ENCODE measurements at regions of chr3 and their contacts with region 1.

Region 1: GRCh38 chr3:98602078-98602678 is 8.8 kb upstream of the CPOX start:
- DNase-seq: peak; percentile 56 to 67
- ATAC-seq: peak; percentile 92 to 96
- H3K4me3 ChIP-seq: no peak overlapping the region
- H3K27ac ChIP-seq: no peak overlapping the region
- H3K4me1 ChIP-seq: no peaks in the 10 kb centered on the region
- CTCF ChIP-seq: peak; percentile 93
- EP300 ChIP-seq: no peak
- POLR2A ChIP-seq: no peak
- RAD21 ChIP-seq: peak; percentile 89 to 92

Region 2: DNA sequence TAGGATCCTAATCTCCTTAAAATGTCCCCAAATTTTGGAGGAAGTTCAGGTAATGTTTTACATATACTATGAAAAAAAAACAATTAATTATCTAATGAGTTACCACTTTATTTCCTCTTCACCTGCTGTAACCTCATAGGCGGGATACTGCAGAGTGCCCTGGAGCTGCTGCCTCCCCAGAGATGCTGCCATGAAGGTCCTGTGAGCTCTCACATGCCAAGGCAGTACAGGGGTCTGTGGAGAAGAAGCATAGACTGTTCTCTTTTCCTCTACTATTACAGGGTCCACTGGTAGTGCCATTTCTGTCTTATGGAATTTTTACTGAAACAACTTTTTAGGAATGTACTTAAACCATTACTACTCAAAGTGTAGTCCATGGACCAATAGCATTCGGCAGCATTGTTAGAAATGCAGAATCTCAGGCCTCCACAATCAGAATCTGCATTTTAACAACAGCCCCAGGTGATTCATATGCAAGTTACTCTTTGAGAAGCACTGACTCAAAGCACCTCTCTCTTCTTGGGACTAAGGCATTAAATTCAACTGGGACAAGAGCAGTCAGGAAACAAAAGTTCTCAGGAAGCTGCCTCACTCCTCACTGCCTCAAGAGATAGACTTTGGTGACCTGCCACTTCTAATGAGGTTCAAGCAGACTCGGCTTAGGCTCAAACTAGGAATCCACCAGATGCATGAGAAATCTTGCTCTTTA is 21.5 kb after region 1 on chr3:
- CTCF ChIA-PET with region 1: interaction called, 16 read pairs
- POLR2A ChIA-PET with region 1: no interaction called
- DNase-seq: no peak
- ATAC-seq: no peak
- H3K4me3 ChIP-seq: no peak overlapping the region
- H3K27ac ChIP-seq: no peak overlapping the region
- H3K4me1 ChIP-seq: no peaks in the 10 kb centered on the region
- CTCF ChIP-seq: no peak
- EP300 ChIP-seq: no peak
- POLR2A ChIP-seq: no peak
- RAD21 ChIP-seq: no peak

Region 3: DNA sequence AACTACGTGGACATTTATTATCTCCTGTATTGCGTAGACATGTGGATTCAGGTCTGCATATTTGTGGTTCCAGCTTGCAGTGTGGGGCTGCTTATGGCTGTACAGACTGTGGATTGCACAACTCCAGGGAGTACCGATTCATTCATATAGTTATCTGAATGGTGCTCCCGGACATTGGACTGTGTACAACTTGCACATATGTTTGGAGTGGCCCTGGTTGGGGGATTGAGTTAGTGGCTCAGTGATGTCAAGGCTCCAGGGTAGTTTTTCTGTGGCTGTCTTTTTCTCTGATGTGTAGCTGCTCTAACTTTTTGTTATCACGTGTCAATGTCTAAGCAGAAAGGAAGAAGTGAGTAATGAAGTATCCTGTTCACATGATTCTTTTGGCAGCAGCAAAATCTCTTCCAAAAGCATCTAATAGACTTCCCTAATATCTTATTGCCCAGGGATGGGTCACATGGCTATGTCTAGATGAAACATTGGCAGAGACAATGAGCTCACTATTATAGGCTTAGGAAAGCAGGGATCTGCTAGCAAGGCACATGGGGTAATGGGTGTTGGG is 176.8 kb after region 1 on chr3:
- CTCF ChIA-PET with region 1: interaction called, 13 read pairs
- POLR2A ChIA-PET with region 1: no interaction called
- DNase-seq: no peak
- ATAC-seq: peak in 1 of 2 experiments; percentile 30; a peak in 1 of 6 replicates
- H3K4me3 ChIP-seq: no peak overlapping the region
- H3K27ac ChIP-seq: no peak overlapping the region
- H3K4me1 ChIP-seq: no peaks in the 10 kb centered on the region
- CTCF ChIP-seq: no peak
- EP300 ChIP-seq: no peak
- POLR2A ChIP-seq: no peak
- RAD21 ChIP-seq: no peak

Region 4: GRCh38 chr3:98817547-98818041 is 215.4 kb after region 1 on chr3:
- CTCF ChIA-PET with region 1: interaction called, 110 read pairs
- POLR2A ChIA-PET with region 1: no interaction called
- DNase-seq: peak; percentile 47 to 59
- ATAC-seq: peak; percentile 55 to 67; a peak in 5 of 6 replicates
- H3K4me3 ChIP-seq: no peak overlapping the region
- H3K27ac ChIP-seq: peak overlapping the region; percentile 51 to 76; a peak in 5 of 6 replicates
- H3K4me1 ChIP-seq: peaks cover 63% of the 10 kb centered on the region
- CTCF ChIP-seq: peak; percentile 71
- EP300 ChIP-seq: no peak
- POLR2A ChIP-seq: no peak
- RAD21 ChIP-seq: peak; percentile 70 to 79

Region 5: DNA sequence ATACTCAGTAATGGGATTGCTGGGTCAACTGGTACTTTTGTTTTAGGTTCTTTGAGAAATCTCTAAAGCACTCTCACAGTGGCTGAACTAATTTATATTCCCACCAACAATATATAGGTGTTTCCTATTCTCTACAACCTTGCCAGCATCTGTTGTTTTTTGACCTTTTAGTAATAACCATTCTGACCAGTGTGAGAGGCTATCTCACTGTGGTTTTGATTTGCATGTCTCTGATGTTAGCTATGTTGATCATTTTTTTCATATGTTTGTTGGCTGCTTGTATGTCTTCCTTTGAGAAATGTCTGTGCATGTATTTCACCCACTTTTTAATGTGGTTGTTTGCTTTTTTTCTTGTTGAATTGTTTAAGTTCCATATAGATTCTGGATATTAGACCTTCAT is 397.5 kb after region 1 on chr3:
- CTCF ChIA-PET with region 1: interaction called, 55 read pairs
- POLR2A ChIA-PET with region 1: interaction called, 3 read pairs
- DNase-seq: no peak
- ATAC-seq: no peak
- H3K4me3 ChIP-seq: no peak overlapping the region
- H3K27ac ChIP-seq: no peak overlapping the region
- H3K4me1 ChIP-seq: no peaks in the 10 kb centered on the region
- CTCF ChIP-seq: no peak
- EP300 ChIP-seq: no peak
- POLR2A ChIP-seq: no peak
- RAD21 ChIP-seq: no peak

Measured in A549 (cell line).